Activated CD4-positive, alpha-beta memory T cell treated with anti-CD3 and anti-CD28 coated beads for 36 hours (primary cell): ENCODE measurements at regions of chr6 and their contacts with region 1.

Region 1: DNA sequence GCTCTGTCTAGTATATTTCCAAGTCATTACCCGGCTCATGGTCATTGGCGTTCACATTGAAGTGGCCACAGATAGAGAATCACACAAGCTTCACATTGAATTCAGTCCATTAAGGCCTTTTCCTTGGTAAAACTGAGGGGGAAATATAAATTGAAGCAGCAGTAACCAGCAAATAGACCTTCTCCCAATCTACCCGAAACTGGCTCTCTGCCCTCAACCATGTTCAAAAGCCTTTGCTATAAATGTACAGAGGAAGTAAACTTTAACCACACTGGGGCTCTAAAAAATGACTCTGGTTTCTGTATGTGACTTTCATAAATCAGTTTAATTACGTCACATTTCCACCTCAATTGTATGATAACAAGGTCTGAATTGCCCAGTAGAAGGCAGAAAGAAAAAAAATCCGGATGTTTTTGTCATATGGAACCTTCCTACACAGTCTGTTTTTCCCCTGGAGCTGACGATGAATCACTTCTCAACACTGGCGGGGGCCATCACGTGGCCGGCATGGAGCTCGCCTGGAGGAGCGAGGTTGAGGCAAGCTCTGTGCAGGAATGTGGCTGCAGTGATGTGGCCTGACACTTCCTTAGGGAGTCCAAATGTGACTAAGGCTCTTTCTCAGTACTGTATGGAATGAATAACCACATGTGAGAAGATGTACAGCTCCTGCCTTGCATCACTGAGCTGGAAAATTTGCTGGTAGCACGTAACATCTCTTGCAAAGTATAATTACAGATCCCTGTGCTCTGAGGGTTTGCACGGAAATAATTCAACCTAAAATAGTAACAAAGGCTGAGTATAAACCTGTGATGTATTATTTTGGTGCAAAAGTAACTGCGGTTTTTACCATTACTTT is 58.6 kb upstream of the SNX9 start:
- DNase-seq: peak; percentile 93
- H3K4me3 Mint-ChIP-seq: peak overlapping the region; percentile 52
- H3K27ac Mint-ChIP-seq: peak overlapping the region; percentile 89
- H3K4me1 Mint-ChIP-seq: peaks cover 78% of the 10 kb centered on the region
- H3K27me3 Mint-ChIP-seq: no peaks in the 10 kb centered on the region

Region 2: GRCh38 chr6:157461000-157461915 is 303.1 kb before region 1 on chr6:
- CTCF ChIA-PET with region 1: no interaction called
- POLR2A ChIA-PET with region 1: no interaction called
- intact Hi-C with region 1: loop called (anchors 10 kb)
- DNase-seq: peak; percentile 89
- H3K4me3 Mint-ChIP-seq: no peak overlapping the region
- H3K27ac Mint-ChIP-seq: peak overlapping the region; percentile 75
- H3K4me1 Mint-ChIP-seq: peaks cover 40% of the 10 kb centered on the region
- H3K27me3 Mint-ChIP-seq: peaks cover 7% of the 10 kb centered on the region

Region 3: GRCh38 chr6:157779705-157780604 is 15.5 kb after region 1 on chr6:
- CTCF ChIA-PET with region 1: no interaction called
- POLR2A ChIA-PET with region 1: no interaction called
- intact Hi-C with region 1: no loop called
- DNase-seq: no peak
- H3K4me3 Mint-ChIP-seq: no peak overlapping the region
- H3K27ac Mint-ChIP-seq: no peak overlapping the region
- H3K4me1 Mint-ChIP-seq: no peaks in the 10 kb centered on the region
- H3K27me3 Mint-ChIP-seq: no peaks in the 10 kb centered on the region

Region 4: DNA sequence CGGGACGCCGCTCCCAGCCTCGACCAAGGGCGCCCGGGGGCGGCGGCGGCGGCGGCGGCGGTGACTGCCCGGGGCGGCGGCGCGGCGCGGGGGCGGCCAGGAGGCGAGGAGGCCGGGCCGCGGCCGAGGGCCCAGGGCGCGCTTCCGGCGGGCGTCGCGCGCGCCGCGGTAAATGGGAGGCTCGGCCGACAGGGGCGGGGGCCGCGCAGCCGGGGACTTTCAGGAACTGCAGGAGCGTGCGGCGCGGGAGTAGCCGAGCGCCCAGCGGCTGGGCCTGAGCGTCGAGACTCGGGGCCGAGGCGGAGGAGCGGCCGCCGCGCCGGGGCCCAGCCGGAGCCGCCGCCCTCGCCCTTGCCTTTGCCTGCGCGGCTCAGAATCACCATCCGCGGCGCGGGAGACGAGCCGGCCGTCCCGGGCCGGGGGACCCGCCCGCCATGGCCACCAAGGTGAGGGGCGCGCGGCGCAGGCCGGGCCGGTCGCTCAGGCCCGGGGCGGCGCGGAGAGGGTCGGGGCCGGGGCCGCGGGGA is 58.7 kb after region 1 on chr6 and contains the start of gene SNX9:
- CTCF ChIA-PET with region 1: no interaction called
- POLR2A ChIA-PET with region 1: interaction called, 7 read pairs
- intact Hi-C with region 1: loop called (anchors 1 kb)
- DNase-seq: peak; percentile 81
- H3K4me3 Mint-ChIP-seq: peak within 1 kb of the TSS; percentile 96
- H3K27ac Mint-ChIP-seq: peak within 1 kb of the TSS; percentile 99
- H3K4me1 Mint-ChIP-seq: peaks cover 38% of the 10 kb centered on the region
- H3K27me3 Mint-ChIP-seq: no peaks in the 10 kb centered on the region
- total RNA-seq, gene SNX9: 59.3 to 59.7 TPM

Region 5: GRCh38 chr6:157853018-157853805 is 88.8 kb after region 1 on chr6:
- CTCF ChIA-PET with region 1: no interaction called
- POLR2A ChIA-PET with region 1: no interaction called
- intact Hi-C with region 1: no loop called
- DNase-seq: no peak
- H3K4me3 Mint-ChIP-seq: no peak overlapping the region
- H3K27ac Mint-ChIP-seq: peak overlapping the region; percentile 43
- H3K4me1 Mint-ChIP-seq: peaks cover 48% of the 10 kb centered on the region
- H3K27me3 Mint-ChIP-seq: no peaks in the 10 kb centered on the region

Region 6: GRCh38 chr6:157885211-157885788 is 120.9 kb after region 1 on chr6:
- CTCF ChIA-PET with region 1: interaction called, 172 read pairs
- POLR2A ChIA-PET with region 1: interaction called, 12 read pairs
- intact Hi-C with region 1: loop called (anchors 1 kb)
- DNase-seq: peak; percentile 75
- H3K4me3 Mint-ChIP-seq: no peak overlapping the region
- H3K27ac Mint-ChIP-seq: peak overlapping the region; percentile 94
- H3K4me1 Mint-ChIP-seq: peaks cover 68% of the 10 kb centered on the region
- H3K27me3 Mint-ChIP-seq: no peaks in the 10 kb centered on the region

Region 7: GRCh38 chr6:158207422-158207788 is 443.0 kb after region 1 on chr6:
- CTCF ChIA-PET with region 1: no interaction called
- POLR2A ChIA-PET with region 1: no interaction called
- intact Hi-C with region 1: loop called (anchors 5 kb)
- DNase-seq: peak; percentile 59
- H3K4me3 Mint-ChIP-seq: peak overlapping the region; percentile 30
- H3K27ac Mint-ChIP-seq: peak overlapping the region; percentile 87
- H3K4me1 Mint-ChIP-seq: peaks cover 30% of the 10 kb centered on the region
- H3K27me3 Mint-ChIP-seq: no peaks in the 10 kb centered on the region